ENCODE measurements at regions of chr3 and their contacts with region 1.

Region 1: GRCh38 chr3:108088697-108089096 is 2.1 kb downstream of the CD47 start:
- DNase-seq: no peak
- ATAC-seq: no peak
- H3K4me3 ChIP-seq: peak overlapping the region; percentile 90 to 92
- H3K27ac ChIP-seq: peak overlapping the region; percentile 88
- H3K4me1 ChIP-seq: peaks cover 19% of the 10 kb centered on the region; the same call in 1 of the 2 replicates
- H3K27me3 ChIP-seq: no peaks in the 10 kb centered on the region
- CTCF ChIP-seq: no peak

Region 2: DNA sequence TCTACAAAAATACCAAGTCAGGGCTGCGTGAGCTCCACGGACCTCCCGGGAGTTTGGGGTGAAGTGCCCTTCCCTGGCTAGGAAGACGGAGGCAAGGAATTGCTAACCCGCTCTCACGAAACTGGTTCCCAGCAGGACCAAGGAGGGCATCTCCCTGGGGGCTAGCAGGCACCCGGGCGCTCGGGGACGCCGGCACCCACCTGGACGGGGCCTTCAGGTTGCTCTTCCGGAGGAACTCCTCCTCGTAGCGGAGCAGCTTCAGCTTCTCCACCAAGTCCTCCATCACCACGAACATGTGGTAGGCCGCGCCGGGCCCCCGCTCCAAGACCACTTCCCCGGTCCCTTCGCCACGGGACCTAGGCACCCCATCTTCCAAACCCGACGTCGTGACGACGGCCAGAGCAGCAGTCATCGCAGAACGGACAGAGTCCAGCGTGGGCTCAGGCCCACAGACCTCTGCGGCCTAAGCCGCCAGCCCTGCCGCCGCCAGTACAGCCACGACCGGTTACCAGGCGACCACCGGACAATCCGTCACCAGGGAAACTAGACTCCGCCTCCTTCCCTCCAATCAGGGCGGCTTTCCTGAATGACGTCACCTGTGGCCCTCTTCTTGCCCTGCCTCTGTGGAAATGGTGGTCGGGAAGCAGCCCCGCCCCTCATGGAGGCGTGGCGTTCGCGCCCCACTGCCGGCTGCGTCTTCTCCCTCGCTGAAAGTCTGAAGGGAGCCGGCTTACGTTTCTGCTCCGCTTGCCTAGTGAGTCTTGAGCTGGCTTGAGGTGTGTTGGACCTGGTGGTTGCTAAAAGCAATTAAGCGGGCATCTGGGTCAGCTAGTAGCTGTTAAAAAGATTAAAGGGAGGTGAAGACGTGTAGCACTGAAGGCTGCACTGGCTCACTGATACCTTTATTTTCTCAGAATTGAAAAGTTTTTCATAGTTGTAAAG is 133.5 kb after region 1 on chr3 and contains the start of gene IFT57:
- CTCF ChIA-PET with region 1: no interaction called
- POLR2A ChIA-PET with region 1: no interaction called
- in situ Hi-C with region 1: no loop called
- intact Hi-C with region 1: loop called (anchors 5 kb)
- DNase-seq: peak; percentile 81
- ATAC-seq: peak; percentile 98
- H3K4me3 ChIP-seq: peak within 1 kb of the TSS; percentile 67 to 96
- H3K27ac ChIP-seq: peak within 1 kb of the TSS; percentile 88
- H3K4me1 ChIP-seq: peaks cover 30% of the 10 kb centered on the region
- H3K27me3 ChIP-seq: no peaks in the 10 kb centered on the region
- CTCF ChIP-seq: no peak
- total RNA-seq, gene IFT57: 45.7 TPM

Region 3: DNA sequence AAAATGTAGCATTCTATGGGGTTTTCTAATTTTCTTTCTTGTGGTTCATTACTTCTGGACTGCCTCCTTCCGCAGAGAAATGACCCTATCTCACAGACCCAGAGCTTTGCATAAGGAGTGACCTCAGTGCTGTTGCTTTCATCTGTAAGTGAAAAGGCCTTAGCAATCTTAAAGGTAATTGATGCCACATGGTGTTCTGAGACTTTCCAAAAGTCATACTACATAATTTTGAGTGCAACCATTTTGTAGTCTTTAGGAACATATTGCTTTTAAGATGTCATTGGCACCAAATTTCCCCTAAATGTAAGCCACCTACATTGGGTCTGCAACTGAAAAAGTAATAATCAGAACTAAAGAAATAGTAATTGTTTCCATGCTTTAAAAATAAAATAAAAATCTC is 198.4 kb after region 1 on chr3:
- CTCF ChIA-PET with region 1: no interaction called
- POLR2A ChIA-PET with region 1: no interaction called
- in situ Hi-C with region 1: no loop called
- intact Hi-C with region 1: no loop called
- DNase-seq: no peak
- ATAC-seq: no peak
- H3K4me3 ChIP-seq: no peak overlapping the region
- H3K27ac ChIP-seq: no peak overlapping the region
- H3K4me1 ChIP-seq: no peaks in the 10 kb centered on the region
- H3K27me3 ChIP-seq: no peaks in the 10 kb centered on the region
- CTCF ChIP-seq: no peak

Measured in Panc1 (cell line).